Activated CD4-positive, alpha-beta T cell treated with anti-CD3 and anti-CD28 coated beads for 36 hours (primary cell): ENCODE measurements at regions of chr4 and their contacts with region 1.

Region 1: DNA sequence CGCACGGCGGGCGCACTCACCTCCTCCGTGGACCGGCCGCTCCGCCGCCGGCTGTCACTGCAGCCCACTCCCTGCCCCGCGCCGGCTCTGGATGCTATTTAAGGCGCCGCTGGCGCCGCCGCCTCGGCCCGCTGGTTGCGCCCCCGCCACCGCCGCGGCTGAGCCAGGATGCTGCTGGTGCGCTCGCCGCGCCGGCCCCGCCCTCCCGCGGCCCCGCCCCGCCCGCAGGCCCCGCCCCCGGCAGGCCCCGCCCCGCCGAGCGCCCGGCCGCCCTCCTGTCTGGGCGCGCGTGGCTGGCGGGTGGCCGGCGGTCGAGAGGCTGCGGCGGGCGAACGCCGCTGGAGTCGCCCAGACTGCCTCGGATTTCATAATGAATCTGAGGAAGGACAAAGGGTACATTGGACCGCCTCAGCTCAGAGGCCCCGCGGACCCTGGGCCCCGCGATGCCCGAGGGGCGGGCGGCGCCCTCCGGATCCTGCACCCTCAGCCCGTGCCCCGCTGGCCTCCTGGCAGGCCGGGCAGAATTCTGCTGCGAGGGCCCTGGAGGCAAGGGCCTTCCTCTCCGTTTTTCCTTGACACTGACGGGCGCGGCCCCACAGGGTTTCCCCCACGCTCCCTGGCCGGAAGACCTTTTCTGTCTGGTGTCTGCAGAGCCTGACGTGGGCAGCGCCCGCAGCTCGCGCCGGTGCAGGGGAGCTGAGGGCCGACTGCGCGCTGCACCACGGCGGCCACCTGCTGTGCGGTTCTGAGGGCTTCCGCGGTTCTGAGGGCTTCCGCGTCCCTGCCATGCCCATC is at the start of gene ACSL1:
- DNase-seq: peak; percentile 88
- ATAC-seq: peak; percentile 82
- H3K4me3 Mint-ChIP-seq: peak within 1 kb of the TSS; percentile 87
- H3K27ac Mint-ChIP-seq: peak within 1 kb of the TSS; percentile 89
- H3K4me1 Mint-ChIP-seq: peaks cover 34% of the 10 kb centered on the region
- H3K27me3 Mint-ChIP-seq: no peaks in the 10 kb centered on the region
- total RNA-seq, gene ACSL1: 17.1 to 17.2 TPM

Region 2: GRCh38 chr4:183659029-183659871 is 1166.8 kb before region 1 on chr4 and contains the starts of genes RWDD4 and TRAPPC11:
- CTCF ChIA-PET with region 1: no interaction called
- POLR2A ChIA-PET with region 1: no interaction called
- intact Hi-C with region 1: loop called in 1 of 2 experiments (anchors 5 kb)
- DNase-seq: peak; percentile 97
- ATAC-seq: peak; percentile 100
- H3K4me3 Mint-ChIP-seq: peak within 1 kb of the TSS; percentile 97
- H3K27ac Mint-ChIP-seq: peak within 1 kb of the TSS; percentile 95
- H3K4me1 Mint-ChIP-seq: peaks cover 35% of the 10 kb centered on the region
- H3K27me3 Mint-ChIP-seq: no peaks in the 10 kb centered on the region
- total RNA-seq, gene RWDD4: 19.4 to 26.5 TPM
- total RNA-seq, gene TRAPPC11: 27.7 to 37.9 TPM

Region 3: DNA sequence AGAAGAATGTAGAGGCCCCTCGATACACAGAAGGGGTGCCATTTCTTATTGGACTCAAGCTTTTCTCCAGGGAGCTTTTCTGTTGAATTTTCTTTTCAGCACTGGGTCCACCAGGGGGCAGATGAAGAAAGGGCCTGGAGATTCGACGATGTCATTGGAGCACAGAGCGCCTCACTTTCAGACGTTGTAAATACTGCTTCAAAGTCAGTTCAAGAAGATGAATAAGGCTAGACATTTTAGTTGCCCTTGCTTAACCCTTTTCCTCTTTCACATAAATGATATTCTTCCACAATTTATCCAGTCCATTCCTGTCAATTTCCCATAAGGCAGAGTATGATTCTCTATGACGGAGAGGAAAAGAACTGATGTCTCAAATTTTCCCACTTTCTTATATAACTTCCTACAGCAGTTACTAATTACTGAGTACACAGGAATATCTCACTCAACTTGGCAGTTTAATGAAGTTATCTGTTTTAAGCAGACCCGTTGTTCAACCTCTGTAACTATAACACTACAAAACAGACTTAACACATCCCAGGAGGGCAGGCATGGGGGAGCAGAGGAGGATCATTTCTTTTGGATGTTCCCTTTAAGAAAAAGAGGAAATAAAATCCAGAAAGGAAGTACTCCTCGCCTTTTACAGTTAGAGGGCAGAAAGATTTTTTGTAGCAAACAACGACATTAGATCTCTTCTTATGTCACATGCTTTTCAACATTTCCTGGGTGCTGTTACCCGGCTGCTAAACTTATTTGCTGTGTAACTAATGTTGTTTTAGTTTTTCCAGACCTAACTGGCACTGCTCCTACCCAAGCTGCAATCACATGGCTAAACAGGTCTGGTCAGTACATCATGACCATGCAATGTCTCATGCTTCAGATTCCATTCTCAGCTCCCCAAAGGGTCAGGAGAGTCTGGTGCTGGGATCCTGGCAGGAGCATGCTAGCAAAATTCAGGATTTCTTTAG is 80.0 kb before region 1 on chr4:
- CTCF ChIA-PET with region 1: interaction called, 5 read pairs
- POLR2A ChIA-PET with region 1: interaction called, 3 read pairs
- intact Hi-C with region 1: loop called (anchors 2 to 5 kb)
- DNase-seq: peak; percentile 87
- ATAC-seq: peak; percentile 89
- H3K4me3 Mint-ChIP-seq: no peak overlapping the region
- H3K27ac Mint-ChIP-seq: peak overlapping the region; percentile 32
- H3K4me1 Mint-ChIP-seq: peaks cover 12% of the 10 kb centered on the region
- H3K27me3 Mint-ChIP-seq: no peaks in the 10 kb centered on the region

Region 4: DNA sequence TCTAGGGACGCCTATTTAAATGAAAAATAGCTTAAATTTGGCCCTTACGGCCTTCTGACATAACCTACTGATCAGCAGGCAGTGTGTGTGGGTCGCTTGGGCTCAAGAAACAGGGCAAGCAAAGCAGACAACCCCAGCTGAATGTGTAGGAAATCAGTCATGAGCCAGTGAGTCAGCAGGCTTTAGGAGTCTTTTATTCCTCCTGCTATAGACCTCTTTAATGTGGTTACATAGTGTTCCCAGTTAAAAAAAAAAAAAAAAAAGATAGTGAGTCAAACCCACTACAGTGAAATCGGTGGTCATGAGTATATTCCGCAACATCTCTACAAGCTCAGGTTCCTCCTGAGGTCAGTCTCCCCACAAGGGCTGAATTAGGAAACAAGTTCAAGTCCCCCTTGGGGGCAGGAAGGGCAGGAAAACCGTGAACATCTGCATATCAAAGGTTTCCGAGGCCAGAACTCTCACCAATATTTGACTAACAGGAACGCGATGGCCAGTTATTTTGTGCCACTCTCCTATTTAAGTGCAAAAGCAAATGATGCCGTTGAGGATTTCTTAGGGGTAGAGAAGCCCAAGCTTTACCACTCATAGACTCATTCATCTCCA is 33.0 kb before region 1 on chr4:
- CTCF ChIA-PET with region 1: interaction called, 3 read pairs
- POLR2A ChIA-PET with region 1: interaction called, 4 read pairs
- intact Hi-C with region 1: loop called in 1 of 2 experiments (anchors 1 kb)
- DNase-seq: peak; percentile 62
- ATAC-seq: peak; percentile 97
- H3K4me3 Mint-ChIP-seq: no peak overlapping the region
- H3K27ac Mint-ChIP-seq: no peak overlapping the region
- H3K4me1 Mint-ChIP-seq: peaks cover 29% of the 10 kb centered on the region
- H3K27me3 Mint-ChIP-seq: no peaks in the 10 kb centered on the region

Region 5: DNA sequence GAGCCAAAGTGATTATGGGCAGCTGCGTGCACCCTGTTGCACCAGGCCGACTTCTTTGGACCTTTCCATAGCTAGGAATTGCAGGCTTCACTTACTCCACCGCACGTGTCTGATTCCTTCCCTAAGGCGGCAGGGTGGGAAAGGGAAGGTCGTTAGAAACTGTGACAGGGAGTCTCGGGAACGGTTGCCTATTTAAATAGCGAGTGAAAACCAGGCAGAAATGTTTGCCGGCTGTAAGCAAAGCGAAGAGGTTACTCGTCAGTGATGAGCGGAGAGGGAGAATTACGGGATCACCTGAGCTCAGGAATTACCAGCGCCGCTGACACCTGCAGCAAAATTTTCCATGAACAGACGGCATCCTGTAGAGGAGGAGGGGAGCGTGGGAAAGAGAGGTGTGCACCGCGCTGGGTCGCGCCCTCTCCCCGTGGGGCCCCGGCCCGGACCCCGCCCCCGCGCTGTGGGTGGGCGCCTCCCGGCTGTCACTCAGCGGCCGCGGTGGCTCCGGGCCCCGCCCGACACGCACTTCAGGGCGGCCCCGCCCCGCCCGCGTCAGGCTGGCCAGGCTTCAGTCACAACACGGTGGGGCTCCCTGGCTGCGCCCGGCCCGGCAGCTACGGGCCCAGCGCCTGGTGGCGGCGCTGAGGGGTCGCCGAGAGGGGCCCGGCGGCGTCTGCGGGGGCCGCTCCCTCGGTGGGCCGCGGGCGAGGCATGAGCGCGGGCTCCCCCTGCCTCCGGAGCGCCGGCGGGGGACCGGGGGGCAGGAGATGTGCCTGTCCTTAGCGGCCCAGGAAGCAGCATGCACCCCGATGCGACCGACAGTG is 383.1 kb after region 1 on chr4 and contains the start of gene SNX25:
- CTCF ChIA-PET with region 1: no interaction called
- POLR2A ChIA-PET with region 1: no interaction called
- intact Hi-C with region 1: loop called in 1 of 2 experiments (anchors 2 kb)
- DNase-seq: peak; percentile 93
- ATAC-seq: peak; percentile 90
- H3K4me3 Mint-ChIP-seq: peak within 1 kb of the TSS; percentile 89
- H3K27ac Mint-ChIP-seq: peak within 1 kb of the TSS; percentile 78
- H3K4me1 Mint-ChIP-seq: peaks cover 35% of the 10 kb centered on the region
- H3K27me3 Mint-ChIP-seq: peaks cover 2% of the 10 kb centered on the region
- total RNA-seq, gene SNX25: 14.8 to 15.0 TPM